Common myeloid progenitor, CD34-positive (primary cell): ENCODE measurements at regions of chr10 and their contacts with region 1.

Region 1: DNA sequence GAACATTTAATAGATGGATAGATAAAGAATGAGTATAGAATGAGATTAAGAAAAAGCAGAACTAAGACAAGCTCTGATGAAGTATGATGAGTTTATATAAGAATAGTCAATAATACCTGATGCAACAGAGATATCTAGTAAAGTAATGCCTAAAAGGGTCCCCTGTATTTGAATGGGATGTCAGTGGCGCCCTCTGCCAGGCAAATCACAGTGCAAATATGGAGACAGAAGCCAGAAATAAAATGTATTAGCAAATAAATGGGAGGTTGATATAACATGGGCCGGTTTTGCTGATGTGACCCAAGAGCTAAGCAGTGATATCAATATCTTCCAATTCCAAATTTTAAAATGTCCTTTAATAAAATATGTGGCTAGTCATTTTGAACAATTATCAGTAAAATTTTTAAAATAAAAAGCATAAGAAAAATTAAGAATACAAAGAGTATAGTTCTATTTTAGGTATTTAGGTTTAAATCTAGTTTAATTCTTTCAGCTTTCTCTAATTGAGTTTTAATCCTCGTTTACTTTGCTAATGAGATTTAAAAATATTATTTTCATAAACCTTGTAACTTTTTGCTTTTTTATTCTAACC is 62.6 kb downstream of the ADK start:
- DNase-seq: peak; percentile 61 to 73 (median 71)
- H3K4me3 ChIP-seq: no peak overlapping the region
- H3K27ac ChIP-seq: no peak overlapping the region
- H3K4me1 ChIP-seq: no peaks in the 10 kb centered on the region
- H3K27me3 ChIP-seq: no peaks in the 10 kb centered on the region

Region 2: GRCh38 chr10:74151056-74151878 is 62.4 kb before region 1 on chr10 and contains the start of gene ADK:
- CTCF ChIA-PET with region 1: interaction called, 31 read pairs
- POLR2A ChIA-PET with region 1: no interaction called
- DNase-seq: peak; percentile 99 to 100 (median 99)
- H3K4me3 ChIP-seq: peak within 1 kb of the TSS; percentile 75 to 98 (median 93)
- H3K27ac ChIP-seq: peak within 1 kb of the TSS; percentile 98 to 99
- H3K4me1 ChIP-seq: peaks cover 8 to 31% (median 19%) of the 10 kb centered on the region in 4 experiments
- H3K27me3 ChIP-seq: no peaks in the 10 kb centered on the region

Region 3: DNA sequence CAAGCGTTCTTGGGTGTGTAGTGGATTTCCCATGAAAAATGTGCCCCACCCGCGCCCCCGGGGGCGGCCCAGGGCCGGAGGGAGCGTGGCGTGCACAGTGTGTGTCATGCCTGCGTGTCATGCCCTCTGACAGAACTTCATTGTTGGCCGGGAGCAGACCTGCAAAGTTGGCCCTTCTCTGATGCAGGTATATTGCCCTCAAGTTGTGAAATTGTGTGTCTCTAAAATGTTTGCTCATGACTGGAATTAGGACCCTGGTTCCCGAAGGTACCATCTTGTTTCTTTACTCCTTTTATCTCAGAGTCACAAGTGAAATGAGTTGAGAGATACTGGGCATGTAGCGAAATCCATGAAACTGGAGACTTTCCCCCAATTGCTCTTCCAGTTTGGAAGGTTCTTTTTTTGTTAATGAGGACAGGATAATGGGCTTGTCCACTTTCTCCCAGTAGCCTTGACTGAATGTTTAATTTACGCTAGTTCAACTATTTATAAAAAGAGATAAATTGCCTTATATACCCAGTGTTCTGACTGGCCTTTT is 36.5 kb before region 1 on chr10:
- CTCF ChIA-PET with region 1: interaction called, 15 read pairs
- POLR2A ChIA-PET with region 1: interaction called, 3 read pairs
- DNase-seq: peak in 1 of 3 donors; percentile 45
- H3K4me3 ChIP-seq: peak overlapping the region; percentile 71 to 98 (median 89)
- H3K27ac ChIP-seq: peak overlapping the region; percentile 83 to 95
- H3K4me1 ChIP-seq: peaks cover 9 to 36% (median 20%) of the 10 kb centered on the region in 4 experiments
- H3K27me3 ChIP-seq: no peaks in the 10 kb centered on the region

Region 4: GRCh38 chr10:74227697-74228424 is 14.2 kb after region 1 on chr10:
- CTCF ChIA-PET with region 1: interaction called, 29 read pairs
- POLR2A ChIA-PET with region 1: no interaction called
- DNase-seq: peak; percentile 64 to 89 (median 85)
- H3K4me3 ChIP-seq: no peak overlapping the region
- H3K27ac ChIP-seq: peak overlapping the region in 1 of 2 experiments; percentile 43
- H3K4me1 ChIP-seq: peaks cover 0 to 11% (median 6%) of the 10 kb centered on the region in 4 experiments
- H3K27me3 ChIP-seq: no peaks in the 10 kb centered on the region